ENCODE measurements at regions of chr11 and their contacts with region 1.

Region 1: GRCh38 chr11:35391922-35392813 is 27.2 kb downstream of the SLC1A2 start:
- DNase-seq: peak; percentile 66 to 98
- H3K4me3 ChIP-seq: no peak overlapping the region
- H3K27ac ChIP-seq: no peak overlapping the region
- H3K4me1 ChIP-seq: no peaks in the 10 kb centered on the region
- H3K27me3 ChIP-seq: no peaks in the 10 kb centered on the region; a peak in 2 of 7 replicates
- CTCF ChIP-seq: peak; percentile 80 to 91 (median 91)
- EP300 ChIP-seq: no peak
- POLR2A ChIP-seq: no peak
- RAD21 ChIP-seq: peak; percentile 99 to 100

Region 2: DNA sequence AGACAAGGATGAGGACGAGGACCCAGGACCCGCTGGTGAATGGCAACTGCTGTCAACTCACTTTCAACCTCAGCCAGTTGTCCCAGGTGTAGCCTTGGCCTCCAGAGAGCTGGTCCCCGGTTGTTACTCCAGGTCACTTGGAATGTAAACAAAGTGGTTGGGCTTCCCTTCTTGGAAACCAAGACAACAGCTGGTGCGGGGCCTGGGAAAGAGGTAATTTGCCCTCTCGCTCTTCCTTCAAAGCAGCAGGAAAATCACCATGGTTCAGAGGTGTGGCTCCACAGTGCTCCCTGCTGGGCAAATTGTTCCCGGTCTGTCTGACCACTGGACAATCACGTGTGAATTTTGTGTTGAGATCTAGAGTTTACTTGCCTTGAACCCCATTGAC is 12.2 kb after region 1 on chr11:
- CTCF ChIA-PET with region 1: interaction called, 23 read pairs
- POLR2A ChIA-PET with region 1: no interaction called
- DNase-seq: peak in 1 of 2 experiments; percentile 79
- H3K4me3 ChIP-seq: no peak overlapping the region
- H3K27ac ChIP-seq: no peak overlapping the region
- H3K4me1 ChIP-seq: peaks cover 0 to 3% (median under 1%) of the 10 kb centered on the region in 4 experiments; a peak in 2 of 7 replicates
- H3K27me3 ChIP-seq: no peaks in the 10 kb centered on the region
- CTCF ChIP-seq: peak; percentile 59 to 73 (median 70)
- EP300 ChIP-seq: 0 out of 3 replicates have a peak, but pooled peaks of 1 of the 2 experiments have one; percentile 59
- POLR2A ChIP-seq: no peak
- RAD21 ChIP-seq: peak; percentile 64 to 70

Region 3: GRCh38 chr11:35412285-35412684 is 20.1 kb after region 1 on chr11:
- CTCF ChIA-PET with region 1: interaction called, 18 read pairs
- POLR2A ChIA-PET with region 1: no interaction called
- DNase-seq: no peak
- H3K4me3 ChIP-seq: no peak overlapping the region
- H3K27ac ChIP-seq: no peak overlapping the region
- H3K4me1 ChIP-seq: no peaks in the 10 kb centered on the region
- H3K27me3 ChIP-seq: peaks cover 9 to 26% (median 16%) of the 10 kb centered on the region in 4 experiments
- CTCF ChIP-seq: peak; percentile 2 to 64 (median 52); a peak in 3 of 4 replicates
- EP300 ChIP-seq: no peak
- POLR2A ChIP-seq: no peak
- RAD21 ChIP-seq: peak; percentile 74 to 75